ENCODE measurements at regions of chr6 and their contacts with region 1.

Region 1: DNA sequence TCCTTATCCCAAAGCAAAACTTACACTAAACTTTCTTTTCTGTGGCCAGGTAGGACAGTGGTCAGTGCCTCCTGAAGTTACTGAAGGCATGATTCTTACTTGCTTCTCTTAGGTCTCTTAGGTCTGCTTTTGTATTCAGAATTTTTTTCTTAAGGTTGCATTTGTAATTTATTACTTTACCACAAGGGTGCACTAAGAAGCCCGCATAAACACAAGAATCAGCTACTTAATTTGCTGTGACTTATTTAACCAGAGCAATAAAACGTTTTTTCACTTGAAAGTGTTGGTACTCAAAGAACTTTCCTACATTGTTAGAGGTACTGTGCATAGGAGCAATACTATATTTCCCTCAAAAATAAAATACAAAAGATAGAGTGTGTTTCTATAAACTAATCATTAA is 75.4 kb upstream of the LAMA2 start:
- DNase-seq: no peak
- H3K4me3 ChIP-seq: no peak overlapping the region
- H3K27ac ChIP-seq: no peak overlapping the region
- H3K4me1 ChIP-seq: no peaks in the 10 kb centered on the region
- H3K27me3 ChIP-seq: no peaks in the 10 kb centered on the region
- CTCF ChIP-seq: peak in 3 of 6 experiments; percentile 29 to 43 (median 37)
- POLR2A ChIP-seq: no peak

Region 2: DNA sequence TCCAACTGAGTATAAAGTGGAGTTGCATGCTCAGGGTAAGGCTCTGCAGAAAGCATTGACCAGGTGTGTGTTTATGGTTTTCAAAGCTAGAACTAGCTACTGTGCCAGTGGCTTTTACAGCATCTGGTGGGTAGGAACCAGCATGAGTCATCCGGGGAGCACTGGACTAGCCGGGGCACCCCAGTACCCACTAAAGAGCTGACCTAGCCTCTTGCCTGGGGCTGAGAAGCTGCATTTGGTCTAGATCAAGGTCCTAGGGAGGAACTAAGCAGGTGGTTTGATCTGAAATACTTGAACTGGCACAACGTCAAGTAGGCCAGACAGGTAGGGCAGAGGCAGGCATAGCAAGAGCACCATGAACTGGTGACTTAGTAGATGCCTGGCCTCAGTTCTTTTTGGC is 177.4 kb before region 1 on chr6:
- intact Hi-C with region 1: no loop called
- DNase-seq: no peak
- H3K4me3 ChIP-seq: no peak overlapping the region
- H3K27ac ChIP-seq: no peak overlapping the region
- H3K4me1 ChIP-seq: no peaks in the 10 kb centered on the region
- H3K27me3 ChIP-seq: no peaks in the 10 kb centered on the region
- CTCF ChIP-seq: no peak
- POLR2A ChIP-seq: no peak

Region 3: GRCh38 chr6:128763599-128764300 is 43.8 kb before region 1 on chr6:
- intact Hi-C with region 1: no loop called
- DNase-seq: no peak
- H3K4me3 ChIP-seq: no peak overlapping the region
- H3K27ac ChIP-seq: no peak overlapping the region
- H3K4me1 ChIP-seq: no peaks in the 10 kb centered on the region
- H3K27me3 ChIP-seq: no peaks in the 10 kb centered on the region
- CTCF ChIP-seq: no peak
- POLR2A ChIP-seq: no peak

Region 4: GRCh38 chr6:129251669-129252376 is 444.2 kb after region 1 on chr6:
- intact Hi-C with region 1: loop called in 1 of 2 experiments (anchors 10 kb)
- DNase-seq: peak; percentile 29 to 71 (median 44)
- H3K4me3 ChIP-seq: no peak overlapping the region
- H3K27ac ChIP-seq: no peak overlapping the region
- H3K4me1 ChIP-seq: no peaks in the 10 kb centered on the region
- H3K27me3 ChIP-seq: peaks cover 5% of the 10 kb centered on the region
- CTCF ChIP-seq: peak; percentile 56 to 80 (median 67)
- POLR2A ChIP-seq: no peak